Lower leg skin (tissue), 4 donors: ENCODE measurements at regions of chr13 and their contacts with region 1.

Region 1: GRCh38 chr13:41352935-41353840 is 42.1 kb downstream of the NAA16 start:
- DNase-seq: peak in 1 of 2 donors; percentile 31
- H3K4me3 ChIP-seq: no peak overlapping the region
- CTCF ChIP-seq: peak in 1 of 3 donors; percentile 61
- POLR2A ChIP-seq: no peak

Region 2: GRCh38 chr13:41327994-41328790 is 25.0 kb before region 1 on chr13:
- intact Hi-C with region 1: no loop called
- DNase-seq: no peak
- H3K4me3 ChIP-seq: no peak overlapping the region
- CTCF ChIP-seq: no peak
- POLR2A ChIP-seq: no peak

Region 3: GRCh38 chr13:41365631-41366030 is 12.4 kb after region 1 on chr13:
- intact Hi-C with region 1: no loop called
- DNase-seq: no peak
- H3K4me3 ChIP-seq: no peak overlapping the region
- CTCF ChIP-seq: no peak
- POLR2A ChIP-seq: no peak

Region 4: GRCh38 chr13:41631296-41631965 is 278.2 kb after region 1 on chr13:
- intact Hi-C with region 1: no loop called
- DNase-seq: no peak
- H3K4me3 ChIP-seq: no peak overlapping the region
- CTCF ChIP-seq: no peak
- POLR2A ChIP-seq: no peak

Region 5: DNA sequence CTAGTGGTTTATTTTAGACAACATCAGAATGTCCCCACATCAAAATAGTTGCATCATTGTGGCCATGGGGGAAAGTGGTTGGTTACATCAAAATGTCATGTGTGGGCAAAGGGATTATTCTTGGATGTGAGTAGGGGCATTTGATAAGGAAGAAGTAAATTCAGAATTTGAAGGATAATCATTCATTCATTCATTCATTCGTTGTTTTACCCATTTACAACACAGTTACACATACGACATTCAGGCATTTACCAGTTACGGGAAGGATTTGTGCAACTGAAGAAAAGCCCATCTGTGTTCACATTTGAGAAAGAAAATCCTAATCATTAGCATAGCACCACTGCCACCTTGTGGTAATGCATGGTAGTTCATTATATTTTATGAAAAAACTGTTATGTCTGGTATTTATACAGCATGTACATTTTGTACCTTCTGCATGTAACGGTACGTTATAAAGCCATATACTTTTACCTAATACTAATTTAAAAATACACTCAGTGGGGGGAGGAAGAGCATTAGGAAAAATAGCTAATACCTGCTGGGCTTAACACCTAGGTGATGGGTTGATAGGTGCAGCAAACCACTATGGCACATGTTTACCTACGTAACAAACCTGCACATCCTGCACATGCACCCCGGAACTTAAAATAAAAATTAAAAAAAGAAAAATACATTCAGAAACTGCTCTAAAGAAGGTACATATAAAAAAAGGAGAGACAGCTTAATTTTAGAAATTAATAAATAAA is 757.4 kb after region 1 on chr13:
- intact Hi-C with region 1: loop called (anchors 10 kb)
- DNase-seq: peak in 1 of 2 donors; percentile 28
- H3K4me3 ChIP-seq: no peak overlapping the region
- CTCF ChIP-seq: peak in 1 of 3 donors; percentile 50
- POLR2A ChIP-seq: no peak